ENCODE measurements at regions of chr13 and their contacts with region 1.

Region 1: DNA sequence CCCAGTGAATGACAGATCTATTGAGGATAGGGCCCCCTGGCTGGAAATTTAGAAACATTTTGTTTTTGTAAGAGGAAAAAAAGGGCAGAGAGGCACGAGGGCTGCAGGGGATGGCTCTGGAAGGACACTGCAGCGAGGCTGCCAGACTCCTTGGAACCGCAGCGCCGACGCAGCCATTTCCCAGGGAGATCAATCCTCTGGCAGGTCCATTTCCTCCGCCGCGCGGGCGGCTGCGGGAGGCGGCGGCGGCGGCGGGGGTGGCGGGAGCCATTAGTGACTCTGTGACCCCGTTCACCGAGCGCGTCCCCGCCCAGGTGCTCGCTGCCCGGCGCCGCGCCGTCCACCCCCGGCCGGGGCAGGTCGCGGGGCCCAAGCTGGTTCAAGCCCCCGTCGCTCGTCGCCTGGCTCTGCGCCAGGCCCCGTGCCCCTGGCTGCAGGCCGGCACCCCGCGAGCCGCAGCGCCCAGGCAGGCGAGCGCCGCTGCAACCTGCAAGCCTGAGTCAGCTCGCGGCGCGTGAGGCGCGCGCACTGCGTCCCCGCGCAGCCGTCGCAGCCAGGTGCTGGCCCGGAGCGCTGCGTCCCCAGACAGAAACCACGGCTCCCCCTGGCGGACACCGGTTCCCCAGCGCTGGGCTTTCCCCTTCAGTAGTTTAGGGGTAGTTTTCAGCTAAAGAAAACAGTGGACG is 192.6 kb downstream of the KATNAL1 start:
- DNase-seq: peak; percentile 96
- ATAC-seq: peak; percentile 82
- H3K4me3 Mint-ChIP-seq: peak overlapping the region; percentile 75
- H3K27ac Mint-ChIP-seq: peak overlapping the region; percentile 76; the same call in 1 of the 2 replicates
- H3K4me1 Mint-ChIP-seq: peaks cover 37% of the 10 kb centered on the region
- H3K27me3 Mint-ChIP-seq: peaks cover 19% of the 10 kb centered on the region
- CTCF ChIP-seq: peak; percentile 67

Region 2: GRCh38 chr13:29763436-29764180 is 351.1 kb before region 1 on chr13:
- CTCF ChIA-PET with region 1: interaction called, 128 read pairs
- POLR2A ChIA-PET with region 1: no interaction called
- DNase-seq: no peak
- ATAC-seq: no peak
- H3K4me3 Mint-ChIP-seq: no peak overlapping the region
- H3K27ac Mint-ChIP-seq: no peak overlapping the region
- H3K4me1 Mint-ChIP-seq: peaks cover 7% of the 10 kb centered on the region; the same call in 1 of the 2 replicates
- H3K27me3 Mint-ChIP-seq: no peaks in the 10 kb centered on the region
- CTCF ChIP-seq: no peak

Region 3: DNA sequence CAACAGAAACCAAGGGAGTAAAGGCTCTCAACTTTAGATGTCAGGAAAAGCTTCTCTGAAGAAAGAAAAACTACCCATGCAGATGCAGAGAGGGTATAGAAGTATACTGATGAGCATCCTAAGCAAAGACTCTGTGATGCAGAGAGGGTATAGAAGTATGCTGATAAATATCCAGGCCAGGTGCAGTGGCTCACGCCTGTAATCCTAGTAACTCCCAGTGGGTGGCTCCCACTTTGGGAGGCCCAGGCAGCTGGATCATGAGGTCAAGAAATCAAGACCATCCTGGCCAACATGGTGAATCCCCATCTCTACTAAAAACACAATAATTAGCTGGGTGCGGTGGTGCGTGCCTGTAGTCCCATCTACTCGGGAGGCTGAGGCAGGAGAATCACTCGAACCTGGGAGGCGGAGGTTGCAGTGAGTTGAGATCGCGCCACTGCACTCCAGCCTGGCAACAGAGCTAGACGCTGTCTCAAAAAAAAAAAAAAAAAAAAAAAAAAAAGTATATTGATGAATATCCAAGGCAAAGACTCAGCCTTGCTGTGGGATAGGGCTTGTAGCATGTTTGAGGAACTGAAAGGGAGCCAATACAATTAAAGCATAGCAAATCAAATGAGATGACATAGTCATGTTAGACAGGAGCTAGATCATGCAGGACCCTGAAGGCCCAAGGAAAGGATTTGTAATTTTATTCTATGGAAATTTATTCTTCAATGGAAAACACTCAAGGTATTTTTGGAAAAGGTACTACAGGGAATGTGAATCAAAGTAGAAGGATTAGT is 279.2 kb before region 1 on chr13:
- CTCF ChIA-PET with region 1: interaction called, 15 read pairs
- POLR2A ChIA-PET with region 1: no interaction called
- DNase-seq: peak; percentile 18
- ATAC-seq: peak; percentile 86
- H3K4me3 Mint-ChIP-seq: no peak overlapping the region
- H3K27ac Mint-ChIP-seq: 0 out of 2 replicates have a peak overlapping the region, but pooled peaks have one; percentile 55
- H3K4me1 Mint-ChIP-seq: peaks cover 55% of the 10 kb centered on the region
- H3K27me3 Mint-ChIP-seq: no peaks in the 10 kb centered on the region
- CTCF ChIP-seq: no peak

Region 4: DNA sequence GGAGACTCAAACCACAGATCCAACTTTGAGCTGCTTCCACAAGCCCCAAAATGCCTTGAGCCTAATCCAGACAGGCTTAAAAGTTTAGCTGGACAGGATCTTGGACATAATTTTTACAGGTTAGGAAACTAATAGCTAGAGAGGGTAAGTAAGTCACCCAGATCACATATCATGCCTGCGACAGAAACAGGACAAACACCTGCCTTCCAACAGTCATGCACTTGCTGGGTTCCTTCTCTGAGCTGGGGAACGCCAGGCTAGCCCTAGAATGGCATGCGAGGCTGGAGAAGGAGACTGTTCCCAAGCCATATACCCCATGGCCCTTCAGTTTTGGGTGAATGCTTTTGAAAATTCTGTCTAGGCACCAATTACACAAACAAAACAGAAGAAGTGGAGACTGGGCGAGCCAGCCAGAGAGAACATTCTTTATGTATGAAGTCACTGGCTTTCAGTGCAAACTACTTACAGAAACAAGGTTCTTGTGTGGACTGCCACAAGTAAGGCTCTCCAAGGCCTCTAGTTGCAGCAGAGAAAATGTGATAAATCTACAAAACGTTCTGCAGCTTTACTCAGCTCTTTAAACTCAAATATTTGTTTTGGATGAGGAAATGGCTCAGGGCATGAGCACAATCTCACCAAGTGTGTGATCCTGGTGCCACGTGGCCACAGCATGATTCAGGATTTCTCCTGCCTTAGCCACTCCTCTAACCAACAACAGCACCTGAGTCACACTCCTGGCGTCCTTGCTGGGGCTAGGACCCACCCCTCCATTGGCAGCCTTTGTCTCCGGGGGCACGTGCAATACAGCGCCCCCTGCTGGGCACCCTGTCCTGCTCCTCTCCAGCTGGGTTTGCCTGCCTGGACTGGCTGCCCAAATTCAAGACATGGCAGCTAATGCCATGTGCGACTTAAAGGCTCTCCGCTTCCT is 190.9 kb before region 1 on chr13:
- CTCF ChIA-PET with region 1: interaction called, 20 read pairs
- POLR2A ChIA-PET with region 1: interaction called, 4 read pairs
- DNase-seq: peak; percentile 71
- ATAC-seq: peak; percentile 94
- H3K4me3 Mint-ChIP-seq: no peak overlapping the region
- H3K27ac Mint-ChIP-seq: no peak overlapping the region
- H3K4me1 Mint-ChIP-seq: peaks cover 18% of the 10 kb centered on the region
- H3K27me3 Mint-ChIP-seq: peaks cover 16% of the 10 kb centered on the region
- CTCF ChIP-seq: peak; percentile 89

Region 5: GRCh38 chr13:29993716-29994488 is 120.8 kb before region 1 on chr13:
- CTCF ChIA-PET with region 1: interaction called, 10 read pairs
- POLR2A ChIA-PET with region 1: no interaction called
- DNase-seq: no peak
- ATAC-seq: no peak
- H3K4me3 Mint-ChIP-seq: no peak overlapping the region
- H3K27ac Mint-ChIP-seq: no peak overlapping the region
- H3K4me1 Mint-ChIP-seq: peaks cover 13% of the 10 kb centered on the region
- H3K27me3 Mint-ChIP-seq: no peaks in the 10 kb centered on the region
- CTCF ChIP-seq: no peak

Region 6: DNA sequence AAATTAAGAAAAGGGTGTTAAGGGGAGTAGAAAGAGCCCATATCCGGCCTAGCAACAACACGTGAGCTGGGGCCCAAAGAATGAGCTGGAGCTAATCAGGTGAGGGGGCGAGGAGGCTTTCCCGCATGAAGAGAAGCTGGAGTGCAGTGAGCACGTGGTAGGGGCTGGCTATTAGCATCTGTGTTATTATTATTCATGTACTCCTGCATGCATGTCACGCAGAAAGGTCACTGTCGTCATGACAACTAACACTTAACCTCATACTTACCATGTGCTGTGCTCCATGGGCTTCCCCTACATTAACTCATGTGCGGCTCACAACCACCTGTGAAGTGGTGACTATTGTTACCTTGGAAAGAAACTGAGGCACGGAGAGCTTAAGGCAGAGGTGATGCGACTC is 36.7 kb before region 1 on chr13:
- CTCF ChIA-PET with region 1: interaction called, 25 read pairs
- POLR2A ChIA-PET with region 1: no interaction called
- DNase-seq: no peak
- ATAC-seq: no peak
- H3K4me3 Mint-ChIP-seq: no peak overlapping the region
- H3K27ac Mint-ChIP-seq: no peak overlapping the region
- H3K4me1 Mint-ChIP-seq: peaks cover 24% of the 10 kb centered on the region
- H3K27me3 Mint-ChIP-seq: peaks cover 3% of the 10 kb centered on the region
- CTCF ChIP-seq: no peak

Region 7: GRCh38 chr13:30204564-30204963 is 89.8 kb after region 1 on chr13:
- CTCF ChIA-PET with region 1: no interaction called
- POLR2A ChIA-PET with region 1: no interaction called
- DNase-seq: no peak
- ATAC-seq: no peak
- H3K4me3 Mint-ChIP-seq: no peak overlapping the region
- H3K27ac Mint-ChIP-seq: no peak overlapping the region
- H3K4me1 Mint-ChIP-seq: peaks cover 2% of the 10 kb centered on the region; the same call in 1 of the 2 replicates
- H3K27me3 Mint-ChIP-seq: no peaks in the 10 kb centered on the region
- CTCF ChIP-seq: no peak

Region 8: GRCh38 chr13:30216111-30216510 is 101.4 kb after region 1 on chr13:
- CTCF ChIA-PET with region 1: no interaction called
- POLR2A ChIA-PET with region 1: no interaction called
- DNase-seq: peak; percentile 16
- ATAC-seq: no peak
- H3K4me3 Mint-ChIP-seq: no peak overlapping the region
- H3K27ac Mint-ChIP-seq: no peak overlapping the region
- H3K4me1 Mint-ChIP-seq: peaks cover 8% of the 10 kb centered on the region
- H3K27me3 Mint-ChIP-seq: no peaks in the 10 kb centered on the region
- CTCF ChIP-seq: no peak

Measured in WTC11 (cell line).